Cardiac septum (tissue), 1 donor: ENCODE measurements at regions of chrX and their contacts with region 1.

Region 1: DNA sequence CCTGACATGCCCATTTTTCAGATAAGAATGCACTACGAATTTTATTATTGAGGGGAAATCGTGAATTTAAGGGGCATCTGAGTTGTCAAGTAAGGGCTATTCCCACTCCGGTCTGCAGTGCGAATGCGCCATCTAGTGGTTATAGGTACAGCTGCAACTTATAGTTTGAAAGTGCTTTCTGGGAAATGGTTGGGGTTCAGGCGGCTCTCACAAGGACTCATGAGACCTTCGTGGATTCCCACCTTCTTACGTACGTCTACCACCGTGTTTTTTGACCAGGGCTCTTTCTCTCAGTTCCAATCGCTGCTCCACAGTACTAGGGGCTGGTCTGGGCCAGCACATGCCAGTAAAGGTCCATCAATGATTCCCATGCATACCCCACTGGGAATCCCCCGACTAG is 12.3 kb downstream of the MSL3 start:
- DNase-seq: no peak

Region 2: DNA sequence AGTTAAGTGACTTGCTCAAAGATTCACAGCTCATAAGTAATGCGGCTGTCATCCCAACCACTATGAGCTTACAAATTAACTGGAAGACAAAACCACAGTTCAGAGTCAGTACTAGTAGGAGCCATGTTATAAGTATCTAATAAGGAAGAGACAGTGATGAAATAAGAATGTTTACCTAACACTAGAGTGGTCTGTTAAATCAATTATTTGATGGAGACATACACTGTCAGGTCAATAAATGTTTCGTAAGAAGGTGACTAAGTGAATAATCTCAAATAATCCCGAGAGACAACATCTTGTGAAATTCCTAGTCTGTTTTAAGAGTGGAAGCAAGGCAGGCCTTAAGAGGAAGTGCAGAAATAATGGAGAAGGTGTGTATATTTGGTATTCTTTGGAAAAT is 502.9 kb before region 1 on chrX:
- intact Hi-C with region 1: no loop called
- DNase-seq: no peak

Region 3: DNA sequence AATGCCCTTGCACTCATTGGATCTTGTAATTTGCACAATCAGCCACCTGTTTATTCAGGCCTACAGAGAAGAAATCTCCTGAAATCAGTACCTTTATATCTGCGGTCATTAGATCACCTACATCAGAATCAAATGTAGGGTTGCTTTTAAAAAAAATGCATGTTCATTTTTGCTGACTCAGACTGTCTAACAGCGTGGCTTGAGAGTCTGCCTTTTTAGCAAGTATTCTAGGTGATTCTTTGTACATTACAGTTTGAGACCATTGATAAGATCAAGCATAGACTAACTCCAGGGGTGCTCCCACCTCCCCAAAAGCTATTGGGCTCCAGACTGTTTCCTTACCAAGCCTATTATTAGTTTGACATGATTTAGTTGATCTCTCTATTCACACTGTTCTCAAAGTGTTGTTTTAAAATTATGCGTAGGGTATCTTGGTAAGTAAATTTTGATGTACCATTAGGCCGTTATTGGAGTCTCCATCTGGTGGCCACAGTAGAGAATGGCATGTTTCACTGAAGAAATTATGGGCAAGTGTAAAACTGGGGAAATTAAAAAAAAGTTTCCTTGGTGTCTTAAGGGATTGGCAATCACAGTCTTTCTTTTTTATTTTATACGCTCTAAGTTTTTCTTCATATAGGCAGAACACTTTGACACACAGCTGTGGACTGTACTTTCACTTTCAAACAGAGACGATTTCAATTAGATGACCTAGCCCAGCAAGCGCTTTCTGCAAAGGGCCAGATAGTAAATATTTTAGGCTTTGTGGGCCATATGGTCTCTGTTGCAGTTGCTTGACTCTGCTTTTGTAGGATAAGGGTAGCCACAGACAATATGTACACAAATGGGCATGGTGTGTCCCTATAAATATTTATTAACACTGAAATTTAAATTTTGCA is 46.0 kb before region 1 on chrX:
- intact Hi-C with region 1: loop called (anchors 5 kb)
- DNase-seq: no peak